SK-N-SH (cell line): ENCODE measurements at regions of chr16 and their contacts with region 1.

Region 1: DNA sequence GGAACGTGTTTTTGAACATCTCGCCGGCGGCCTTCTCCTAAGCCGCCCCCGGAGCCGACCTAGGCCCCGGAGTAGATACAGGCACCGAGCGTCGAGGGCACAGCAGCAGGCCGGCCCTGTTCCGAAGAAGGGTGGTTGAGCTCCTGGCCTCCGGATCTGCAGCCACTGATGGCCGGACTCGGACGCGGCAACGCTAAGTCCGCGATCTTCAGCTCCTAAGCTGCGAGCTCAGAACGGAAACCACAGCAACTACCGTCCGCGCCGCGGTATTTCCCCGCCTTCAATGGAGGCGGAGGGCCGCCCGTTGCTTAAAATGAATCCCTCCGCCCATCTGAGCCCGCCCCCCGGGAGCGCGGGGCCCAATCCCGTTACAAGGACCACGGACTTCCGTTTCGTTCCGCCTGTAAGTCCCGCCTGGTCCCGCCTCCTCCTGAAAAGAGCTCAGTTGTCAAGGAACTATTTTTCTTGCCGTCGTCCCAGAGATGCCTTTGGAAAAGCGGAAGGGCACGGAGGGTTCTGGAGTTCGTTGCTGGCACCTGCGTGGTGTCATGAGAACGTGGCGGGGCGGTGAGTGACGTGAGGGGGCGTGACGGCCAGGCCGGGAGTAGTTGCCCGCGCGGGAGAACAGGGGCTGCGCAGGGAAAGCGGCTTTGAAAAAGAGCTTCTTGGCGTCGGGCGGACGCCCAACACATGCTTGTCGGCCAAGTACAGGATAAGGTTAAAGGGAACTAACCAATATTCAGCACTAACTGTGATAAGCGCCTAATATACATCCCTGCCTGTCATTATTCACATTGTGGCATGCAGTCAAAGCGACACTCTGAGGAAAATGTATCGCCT is at the start of gene CFAP20:
- DNase-seq: peak; percentile 95
- H3K4me3 ChIP-seq: peak within 1 kb of the TSS; percentile 90 to 92
- H3K27ac ChIP-seq: peak within 1 kb of the TSS; percentile 88 to 94
- H3K4me1 ChIP-seq: peaks cover 11 to 29% of the 10 kb centered on the region in 2 experiments; a peak in 3 of 4 replicates
- H3K27me3 ChIP-seq: no peaks in the 10 kb centered on the region
- CTCF ChIP-seq: no peak
- EP300 ChIP-seq: peak in 1 of 2 experiments; percentile 47; a peak in 1 of 4 replicates
- RAD21 ChIP-seq: no peak
- polyA plus RNA-seq, gene CFAP20: 61.6 and 65.9 TPM in 2 replicates

Region 2: DNA sequence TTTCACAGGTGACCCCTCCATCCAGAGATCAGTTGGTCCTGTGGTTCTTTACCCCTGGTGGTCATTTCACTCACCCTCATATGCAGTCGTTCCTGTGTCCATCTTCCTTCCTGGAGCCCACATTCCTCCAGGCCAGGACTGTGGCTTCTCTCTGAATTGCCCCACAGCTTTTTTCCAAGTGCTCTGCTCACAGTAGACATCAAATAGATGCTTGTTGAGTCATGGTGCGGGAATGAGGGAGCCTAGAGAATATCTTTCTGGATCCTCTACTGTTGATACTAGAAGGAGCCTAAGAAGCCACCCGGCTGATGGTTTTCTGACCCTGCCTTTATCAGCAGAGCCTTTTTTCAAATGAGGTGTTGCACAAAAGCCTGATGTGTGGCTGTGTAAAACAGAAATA is 117.7 kb before region 1 on chr16:
- CTCF ChIA-PET with region 1: interaction called, 11 read pairs
- POLR2A ChIA-PET with region 1: no interaction called
- DNase-seq: no peak
- H3K4me3 ChIP-seq: no peak overlapping the region
- H3K27ac ChIP-seq: no peak overlapping the region; a peak in 1 of 4 replicates
- H3K4me1 ChIP-seq: peaks cover 0 to 11% of the 10 kb centered on the region in 2 experiments; a peak in 2 of 4 replicates
- H3K27me3 ChIP-seq: no peaks in the 10 kb centered on the region
- CTCF ChIP-seq: no peak
- EP300 ChIP-seq: no peak
- RAD21 ChIP-seq: no peak

Region 3: GRCh38 chr16:58025351-58026138 is 103.8 kb before region 1 on chr16 and contains the start of gene MMP15:
- CTCF ChIA-PET with region 1: interaction called, 91 read pairs
- POLR2A ChIA-PET with region 1: interaction called, 18 read pairs
- DNase-seq: peak; percentile 87
- H3K4me3 ChIP-seq: peak within 1 kb of the TSS; percentile 64
- H3K27ac ChIP-seq: peak within 1 kb of the TSS in 1 of 2 experiments; percentile 69; a peak in 1 of 4 replicates
- H3K4me1 ChIP-seq: peaks cover 13 to 64% of the 10 kb centered on the region in 2 experiments
- H3K27me3 ChIP-seq: peaks cover 13% of the 10 kb centered on the region
- CTCF ChIP-seq: no peak
- EP300 ChIP-seq: no peak
- RAD21 ChIP-seq: no peak
- polyA plus RNA-seq, gene MMP15: 2.6 and 3.1 TPM in 2 replicates

Region 4: DNA sequence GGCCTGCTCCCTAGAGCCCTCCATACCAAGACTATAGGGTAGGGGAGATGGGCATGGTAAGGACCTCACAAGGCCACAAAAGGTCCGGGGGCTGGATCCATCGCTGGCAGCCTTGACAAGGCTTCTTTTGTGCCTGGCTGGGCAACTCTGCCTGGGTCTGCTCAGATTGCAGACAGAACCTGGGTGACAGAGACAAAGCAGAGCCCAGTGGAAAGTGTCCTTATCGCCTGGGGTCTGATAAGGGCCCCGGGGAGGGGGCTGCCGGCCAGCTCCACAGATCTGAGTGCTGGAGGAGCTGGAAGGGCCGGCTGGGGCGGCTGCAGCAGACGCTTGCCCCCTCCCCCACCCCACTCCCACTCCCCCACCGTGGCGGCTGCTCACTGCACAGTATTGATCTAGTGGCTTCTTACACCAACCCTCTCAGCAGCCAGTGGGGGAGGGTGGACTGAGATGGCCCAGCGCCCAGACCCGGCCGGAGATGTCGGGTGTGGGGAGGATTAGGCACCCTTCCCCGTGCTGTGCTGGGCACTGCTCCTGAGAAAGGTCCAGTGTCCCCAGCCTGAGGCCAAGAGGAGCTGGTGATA is 96.5 kb before region 1 on chr16:
- CTCF ChIA-PET with region 1: interaction called, 91 read pairs
- POLR2A ChIA-PET with region 1: interaction called, 9 read pairs
- DNase-seq: peak; percentile 94
- H3K4me3 ChIP-seq: no peak overlapping the region; a peak in 1 of 4 replicates
- H3K27ac ChIP-seq: peak overlapping the region in 1 of 2 experiments; percentile 96; a peak in 2 of 4 replicates
- H3K4me1 ChIP-seq: peaks cover 0 to 68% of the 10 kb centered on the region in 2 experiments; a peak in 1 of 4 replicates
- H3K27me3 ChIP-seq: no peaks in the 10 kb centered on the region
- CTCF ChIP-seq: no peak
- EP300 ChIP-seq: peak in 1 of 2 experiments; percentile 86; a peak in 2 of 4 replicates
- RAD21 ChIP-seq: peak; percentile 3; the same call in 1 of the 2 replicates

Region 5: DNA sequence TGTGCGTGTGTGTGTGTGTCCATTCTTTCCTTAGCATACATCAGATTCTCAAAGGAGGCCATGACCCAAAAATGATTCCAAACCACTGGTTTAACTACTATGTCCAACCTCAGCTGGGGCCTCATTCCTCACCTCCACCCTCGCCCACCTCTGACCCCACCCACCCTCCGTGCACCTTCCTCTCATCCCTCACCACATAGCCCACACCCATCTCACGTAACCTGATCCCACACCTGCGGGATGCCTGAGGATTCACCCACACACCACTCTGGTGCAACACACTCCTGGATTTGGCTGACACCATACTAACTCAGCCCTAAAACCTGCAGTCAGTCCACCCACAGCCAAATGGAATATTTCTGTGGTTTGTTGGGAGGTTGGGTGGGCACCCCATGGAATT is 71.8 kb after region 1 on chr16:
- CTCF ChIA-PET with region 1: no interaction called
- POLR2A ChIA-PET with region 1: no interaction called
- DNase-seq: no peak
- H3K4me3 ChIP-seq: no peak overlapping the region
- H3K27ac ChIP-seq: no peak overlapping the region
- H3K4me1 ChIP-seq: peaks cover 6 to 14% of the 10 kb centered on the region in 2 experiments; a peak in 3 of 4 replicates
- H3K27me3 ChIP-seq: peaks cover 20% of the 10 kb centered on the region; the same call in 1 of the 2 replicates
- CTCF ChIP-seq: no peak
- EP300 ChIP-seq: no peak
- RAD21 ChIP-seq: no peak